ENCODE measurements at regions of chr1 and their contacts with region 1.

Region 1: DNA sequence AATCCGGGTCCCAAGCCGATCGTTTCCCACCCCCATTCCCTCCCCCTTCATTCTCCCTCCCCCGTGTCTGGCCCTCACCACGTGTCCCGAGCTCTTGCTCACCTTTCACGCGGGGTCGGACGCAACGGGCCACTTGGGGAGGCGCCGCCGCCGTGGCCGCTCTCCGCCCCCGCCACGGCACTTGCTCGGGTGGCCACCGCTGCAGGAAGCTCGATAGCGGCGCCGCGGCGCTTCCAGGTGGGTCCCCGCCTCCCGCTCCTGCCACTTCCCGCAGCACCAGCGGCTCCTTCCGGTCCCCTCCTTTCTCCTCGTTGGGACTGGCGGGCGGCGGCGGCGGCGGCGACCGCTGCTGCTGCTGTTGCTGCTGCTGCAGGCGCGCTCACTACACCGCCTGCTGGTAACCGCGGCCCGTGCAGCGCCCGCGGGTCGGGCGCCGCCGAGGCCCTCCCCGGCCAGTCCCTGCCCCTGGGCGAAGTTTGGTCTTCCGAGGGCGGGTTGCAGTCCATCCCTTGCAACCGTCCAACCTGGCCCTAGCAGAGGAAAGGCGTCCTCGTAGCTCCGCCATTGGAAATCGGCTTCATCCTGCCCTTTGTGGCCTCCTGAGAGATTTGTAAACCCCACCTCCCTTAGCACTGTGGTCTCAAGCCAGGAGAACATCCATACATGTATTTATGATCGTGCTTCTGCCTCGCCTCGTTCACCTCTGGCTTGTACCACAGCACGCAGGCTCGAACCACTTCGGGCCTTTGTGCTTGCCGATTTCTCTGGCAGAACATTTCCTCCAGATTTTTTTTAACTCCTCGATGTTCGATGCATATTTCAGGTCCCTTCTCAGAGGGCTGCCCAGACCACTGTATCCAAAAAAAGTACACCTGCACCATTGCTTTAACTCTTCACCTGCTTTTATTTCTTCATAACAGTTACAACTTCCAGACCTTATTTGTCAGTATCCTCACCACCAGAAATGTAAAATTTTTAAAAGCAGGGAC is 996 bp upstream of the ZZZ3 start:
- DNase-seq: peak; percentile 59 to 91
- ATAC-seq: peak; percentile 88 to 92
- H3K4me3 ChIP-seq: peak overlapping the region; percentile 81
- H3K27ac ChIP-seq: peak overlapping the region; percentile 87 to 100
- H3K4me1 ChIP-seq: peaks cover 37% of the 10 kb centered on the region
- CTCF ChIP-seq: peak; percentile 68
- EP300 ChIP-seq: 0 out of 5 replicates have a peak, but pooled peaks of 1 of the 2 experiments have one; percentile 13
- POLR2A ChIP-seq: peak; percentile 41
- RAD21 ChIP-seq: peak; percentile 45 to 75

Region 2: DNA sequence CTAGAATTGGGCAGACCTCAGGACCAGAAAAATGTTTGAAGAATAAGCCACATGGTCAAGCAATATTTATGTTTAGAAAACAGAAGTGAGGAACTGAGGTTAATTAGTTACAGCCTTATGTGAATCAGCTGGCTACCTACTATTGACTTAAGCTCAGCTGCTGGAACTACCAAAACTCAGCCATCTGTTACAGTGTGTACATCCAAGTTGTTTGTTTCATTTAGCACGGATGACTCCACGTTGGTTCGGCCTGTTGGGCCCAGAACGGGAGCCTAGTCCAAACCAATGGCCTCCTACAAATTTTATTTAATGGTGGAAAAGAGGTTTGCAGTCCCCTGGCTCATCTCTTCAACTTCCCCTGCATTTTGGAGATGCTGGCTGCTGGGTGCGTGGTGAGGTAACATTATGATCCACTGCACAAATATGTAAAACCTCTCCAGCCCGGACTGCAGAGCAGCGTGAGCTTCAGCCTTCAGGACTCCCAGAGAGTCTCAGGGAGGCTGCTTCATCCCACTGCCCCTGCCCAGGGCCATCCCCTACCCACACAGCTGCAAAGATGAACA is 144.4 kb before region 1 on chr1:
- CTCF ChIA-PET with region 1: interaction called, 8 read pairs
- POLR2A ChIA-PET with region 1: interaction called, 16 read pairs
- DNase-seq: peak; percentile 39 to 63
- ATAC-seq: peak; percentile 84 to 88
- H3K4me3 ChIP-seq: peak overlapping the region; percentile 24; the same call in 2 of the 3 replicates
- H3K27ac ChIP-seq: peak overlapping the region; percentile 98 to 99
- H3K4me1 ChIP-seq: peaks cover 71% of the 10 kb centered on the region
- CTCF ChIP-seq: no peak
- EP300 ChIP-seq: no peak
- POLR2A ChIP-seq: no peak
- RAD21 ChIP-seq: no peak; a peak in 1 of 5 replicates

Region 3: GRCh38 chr1:77716065-77716464 is 32.6 kb after region 1 on chr1:
- CTCF ChIA-PET with region 1: no interaction called
- POLR2A ChIA-PET with region 1: no interaction called
- DNase-seq: no peak
- ATAC-seq: no peak
- H3K4me3 ChIP-seq: no peak overlapping the region
- H3K27ac ChIP-seq: no peak overlapping the region
- H3K4me1 ChIP-seq: no peaks in the 10 kb centered on the region
- CTCF ChIP-seq: no peak
- EP300 ChIP-seq: no peak
- POLR2A ChIP-seq: no peak
- RAD21 ChIP-seq: no peak

Measured in A549 (cell line).